Activated CD4-positive, alpha-beta T cell treated with anti-CD3 and anti-CD28 coated beads for 36 hours (primary cell): ENCODE measurements at regions of chr2 and their contacts with region 1.

Region 1: DNA sequence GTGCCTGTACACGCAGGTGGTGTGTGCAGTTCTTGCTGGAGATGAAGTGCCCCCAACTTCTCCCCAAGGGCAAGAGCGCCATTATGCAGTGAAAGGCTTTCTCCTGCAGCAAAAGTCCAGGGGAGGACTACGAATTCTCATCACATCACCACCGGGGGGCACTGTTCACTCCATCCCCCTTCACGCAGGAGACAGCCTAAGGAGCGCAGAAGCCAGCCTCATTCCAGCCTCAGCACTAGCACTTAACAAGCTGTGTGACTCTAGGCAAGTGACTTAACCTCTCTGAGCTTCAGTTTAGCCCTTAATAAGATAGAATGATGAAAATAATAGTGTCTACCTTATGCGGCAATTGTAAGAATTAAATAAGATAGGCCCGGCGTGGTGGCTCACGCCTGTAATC is 32.3 kb downstream of the DNMT3A start:
- DNase-seq: peak; percentile 83
- ATAC-seq: peak; percentile 20
- H3K4me3 Mint-ChIP-seq: no peak overlapping the region
- H3K27ac Mint-ChIP-seq: peak overlapping the region; percentile 9
- H3K4me1 Mint-ChIP-seq: peaks cover 76% of the 10 kb centered on the region
- H3K27me3 Mint-ChIP-seq: no peaks in the 10 kb centered on the region

Region 2: DNA sequence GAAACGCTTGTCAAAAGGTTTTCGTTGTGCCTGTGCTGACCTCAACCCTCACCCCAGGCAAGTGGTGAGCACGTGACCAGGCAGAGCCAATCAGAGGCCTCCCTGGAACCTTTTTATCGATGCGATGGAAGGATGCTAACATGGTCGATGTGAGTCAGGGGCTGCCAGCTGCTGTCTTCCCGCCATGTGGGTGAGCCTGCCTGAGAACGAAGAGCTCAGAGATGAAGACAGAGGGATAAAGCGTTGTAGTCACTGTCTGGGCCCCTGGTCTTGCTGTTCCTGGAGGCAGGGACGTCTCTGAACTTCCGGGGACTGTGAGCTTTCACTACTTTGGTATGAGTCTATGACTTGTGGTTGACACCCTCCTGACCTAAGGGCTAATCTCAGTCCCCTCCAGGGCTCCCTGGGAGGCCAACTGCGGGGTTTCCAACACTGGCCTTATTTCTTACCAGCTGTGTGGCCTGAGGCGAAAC is 13.7 kb after region 1 on chr2:
- CTCF ChIA-PET with region 1: interaction called, 14 read pairs
- POLR2A ChIA-PET with region 1: interaction called, 8 read pairs
- intact Hi-C with region 1: no loop called
- DNase-seq: peak; percentile 81
- ATAC-seq: peak; percentile 76
- H3K4me3 Mint-ChIP-seq: peak overlapping the region; percentile 62
- H3K27ac Mint-ChIP-seq: peak overlapping the region; percentile 96
- H3K4me1 Mint-ChIP-seq: peaks cover 59% of the 10 kb centered on the region
- H3K27me3 Mint-ChIP-seq: no peaks in the 10 kb centered on the region

Region 3: GRCh38 chr2:25567406-25567805 is 258.0 kb after region 1 on chr2:
- CTCF ChIA-PET with region 1: interaction called, 5 read pairs
- POLR2A ChIA-PET with region 1: no interaction called
- intact Hi-C with region 1: loop called in 1 of 2 experiments (anchors 1 kb)
- DNase-seq: no peak
- ATAC-seq: peak; percentile 55
- H3K4me3 Mint-ChIP-seq: no peak overlapping the region
- H3K27ac Mint-ChIP-seq: no peak overlapping the region
- H3K4me1 Mint-ChIP-seq: peaks cover 3% of the 10 kb centered on the region
- H3K27me3 Mint-ChIP-seq: no peaks in the 10 kb centered on the region

Region 4: GRCh38 chr2:25664183-25664964 is 355.0 kb after region 1 on chr2:
- CTCF ChIA-PET with region 1: interaction called, 3 read pairs
- POLR2A ChIA-PET with region 1: no interaction called
- intact Hi-C with region 1: loop called in 1 of 2 experiments (anchors 5 kb)
- DNase-seq: peak; percentile 56
- ATAC-seq: peak; percentile 49
- H3K4me3 Mint-ChIP-seq: no peak overlapping the region
- H3K27ac Mint-ChIP-seq: no peak overlapping the region
- H3K4me1 Mint-ChIP-seq: peaks cover 22% of the 10 kb centered on the region
- H3K27me3 Mint-ChIP-seq: no peaks in the 10 kb centered on the region